Posterior vena cava (tissue), 2 donors: ENCODE measurements at regions of chr9 and their contacts with region 1.

Region 1: GRCh38 chr9:33959725-33960124 is 89.0 kb downstream of the UBAP2 start:
- DNase-seq: no peak

Region 2: GRCh38 chr9:33939924-33940874 is 19.5 kb before region 1 on chr9:
- intact Hi-C with region 1: loop called in 1 of 2 experiments (anchors 2 kb)
- DNase-seq: no peak

Region 3: DNA sequence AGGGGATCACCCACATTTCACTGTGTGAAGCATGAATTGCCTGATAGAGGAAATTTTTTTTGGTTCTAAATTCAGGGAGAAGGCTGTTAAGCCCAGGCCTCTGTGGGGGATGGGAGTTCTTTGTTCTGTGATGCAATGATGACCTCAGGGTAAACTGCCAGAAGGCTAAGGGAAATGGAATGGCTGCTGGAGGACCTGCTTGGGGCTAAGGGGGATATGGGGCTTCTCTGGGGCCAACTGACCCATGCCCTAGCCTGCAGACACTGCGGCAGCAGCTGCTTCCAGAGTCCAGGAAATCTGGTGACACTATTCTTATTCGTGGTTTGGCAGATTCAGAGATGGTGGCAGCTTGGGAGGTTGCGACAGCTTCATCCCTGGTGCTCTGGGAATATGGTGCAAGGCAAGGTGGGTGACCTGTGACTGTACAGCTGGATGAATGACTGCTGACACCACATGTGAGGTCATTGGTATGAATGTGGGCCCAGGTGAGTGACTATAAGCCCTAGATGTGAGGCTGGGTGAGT is 1082.4 kb after region 1 on chr9:
- intact Hi-C with region 1: no loop called
- DNase-seq: no peak